AG04450 (cell line): ENCODE measurements at regions of chr5 and their contacts with region 1.

Region 1: GRCh38 chr5:59174248-59174844 is 591.5 kb downstream of the RAB3C start:
- DNase-seq: peak; percentile 70
- H3K4me3 ChIP-seq: no peak overlapping the region
- H3K27ac ChIP-seq: no peak overlapping the region
- H3K27me3 ChIP-seq: no peaks in the 10 kb centered on the region
- CTCF ChIP-seq: peak; percentile 98

Region 2: GRCh38 chr5:58871648-58872242 is 302.6 kb before region 1 on chr5:
- CTCF ChIA-PET with region 1: interaction called, 11 read pairs
- POLR2A ChIA-PET with region 1: no interaction called
- DNase-seq: no peak
- H3K4me3 ChIP-seq: no peak overlapping the region
- H3K27ac ChIP-seq: no peak overlapping the region
- H3K27me3 ChIP-seq: peaks cover 6% of the 10 kb centered on the region
- CTCF ChIP-seq: peak; percentile 72

Region 3: GRCh38 chr5:58983526-58984452 is 190.6 kb before region 1 on chr5:
- CTCF ChIA-PET with region 1: interaction called, 11 read pairs
- POLR2A ChIA-PET with region 1: no interaction called
- DNase-seq: no peak
- H3K4me3 ChIP-seq: no peak overlapping the region
- H3K27ac ChIP-seq: no peak overlapping the region
- H3K27me3 ChIP-seq: no peaks in the 10 kb centered on the region
- CTCF ChIP-seq: no peak

Region 4: DNA sequence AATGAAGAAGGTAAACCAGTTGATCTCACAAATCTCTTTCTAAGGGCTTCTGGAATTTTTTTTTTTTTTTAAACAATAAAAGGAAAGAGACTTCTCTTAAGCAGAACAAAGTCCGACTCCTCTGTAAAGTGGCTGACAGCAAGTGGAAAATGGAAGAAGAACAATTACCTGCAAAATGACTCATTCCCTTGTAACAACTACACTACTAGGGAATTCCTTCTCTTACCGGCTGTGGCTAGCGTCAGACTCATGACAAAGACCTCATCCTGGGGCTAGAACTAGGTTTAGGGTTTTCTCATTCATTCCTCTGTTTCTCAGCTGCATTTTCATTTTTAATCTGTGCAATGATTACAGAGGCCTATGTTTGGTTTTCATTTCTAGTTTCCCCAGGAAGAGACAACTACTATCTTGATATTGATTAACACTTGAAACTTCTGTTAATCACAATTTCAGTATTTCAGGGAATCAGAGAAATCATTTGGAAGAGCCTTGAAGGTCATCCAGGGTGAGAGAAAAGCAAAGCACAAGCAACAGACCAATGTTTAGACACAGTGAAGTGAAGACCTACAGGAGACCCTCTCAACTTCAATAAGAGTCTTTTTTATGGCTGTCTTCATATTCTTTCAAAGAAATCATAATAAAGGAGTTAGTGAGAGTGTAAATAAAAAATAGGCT is 153.6 kb before region 1 on chr5:
- CTCF ChIA-PET with region 1: interaction called, 16 read pairs
- POLR2A ChIA-PET with region 1: no interaction called
- DNase-seq: no peak
- H3K4me3 ChIP-seq: no peak overlapping the region
- H3K27ac ChIP-seq: no peak overlapping the region
- H3K27me3 ChIP-seq: no peaks in the 10 kb centered on the region
- CTCF ChIP-seq: no peak

Region 5: DNA sequence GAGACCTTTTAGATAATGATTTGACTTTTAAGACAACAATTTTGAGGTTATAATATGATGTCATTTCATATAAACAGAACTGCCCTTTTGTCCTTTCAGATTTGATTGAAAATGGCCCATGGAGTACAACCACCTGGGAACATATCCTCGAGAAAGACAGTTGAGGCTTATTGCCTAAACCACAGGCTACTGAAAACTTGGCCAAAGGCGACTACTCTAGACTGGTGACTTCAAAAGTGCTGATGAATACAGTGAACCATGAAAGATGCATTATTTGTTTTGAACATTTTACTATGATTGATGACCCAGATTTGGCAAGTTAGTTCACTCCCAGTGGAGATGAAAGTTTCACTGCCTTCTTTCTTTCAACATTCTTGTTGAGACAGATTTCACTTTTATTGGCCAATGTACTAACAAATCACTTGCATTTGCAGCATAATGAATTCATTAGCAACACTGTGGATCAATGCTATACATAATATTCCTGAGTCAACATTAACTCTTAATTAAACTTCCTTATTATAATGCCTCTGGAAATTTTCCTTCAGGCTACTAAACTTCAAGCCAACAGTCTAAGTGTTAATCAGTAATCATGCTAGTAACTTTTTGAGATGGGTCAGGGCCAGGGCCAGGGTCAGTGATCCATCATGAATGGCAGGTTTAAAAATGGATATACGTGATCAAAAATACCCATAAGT is 111.2 kb before region 1 on chr5:
- CTCF ChIA-PET with region 1: interaction called, 11 read pairs
- POLR2A ChIA-PET with region 1: no interaction called
- DNase-seq: no peak
- H3K4me3 ChIP-seq: no peak overlapping the region
- H3K27ac ChIP-seq: no peak overlapping the region
- H3K27me3 ChIP-seq: no peaks in the 10 kb centered on the region
- CTCF ChIP-seq: no peak

Region 6: DNA sequence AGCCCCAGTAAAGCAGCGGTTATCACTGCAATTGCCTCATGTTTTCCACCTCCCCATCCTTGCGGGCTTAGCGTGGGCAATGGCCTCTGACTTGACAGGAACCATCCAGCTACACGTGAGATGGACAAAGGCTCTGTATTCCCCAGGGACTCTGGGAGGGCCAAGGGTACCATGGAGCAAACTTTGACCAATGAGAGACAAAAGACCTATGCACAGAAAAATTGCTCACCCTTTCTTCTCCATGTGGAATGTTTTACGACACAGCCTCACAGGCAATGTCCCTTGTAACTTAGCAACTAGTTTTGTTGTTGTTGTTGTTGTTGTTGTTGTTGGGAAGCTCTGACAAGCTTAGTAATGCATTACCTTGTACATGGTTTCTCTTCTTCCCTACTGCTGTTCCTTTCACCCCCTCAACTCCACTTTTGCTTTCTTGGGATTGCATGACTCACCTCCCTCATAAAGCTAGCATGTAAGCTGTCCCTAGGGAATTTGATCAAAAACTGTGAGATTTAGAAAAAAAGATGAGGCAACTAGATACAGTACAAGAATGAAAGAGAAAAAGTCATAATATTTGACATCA is 40.6 kb before region 1 on chr5:
- CTCF ChIA-PET with region 1: interaction called, 30 read pairs
- POLR2A ChIA-PET with region 1: no interaction called
- DNase-seq: peak; percentile 45
- H3K4me3 ChIP-seq: no peak overlapping the region
- H3K27ac ChIP-seq: no peak overlapping the region
- H3K27me3 ChIP-seq: no peaks in the 10 kb centered on the region
- CTCF ChIP-seq: no peak

Region 7: DNA sequence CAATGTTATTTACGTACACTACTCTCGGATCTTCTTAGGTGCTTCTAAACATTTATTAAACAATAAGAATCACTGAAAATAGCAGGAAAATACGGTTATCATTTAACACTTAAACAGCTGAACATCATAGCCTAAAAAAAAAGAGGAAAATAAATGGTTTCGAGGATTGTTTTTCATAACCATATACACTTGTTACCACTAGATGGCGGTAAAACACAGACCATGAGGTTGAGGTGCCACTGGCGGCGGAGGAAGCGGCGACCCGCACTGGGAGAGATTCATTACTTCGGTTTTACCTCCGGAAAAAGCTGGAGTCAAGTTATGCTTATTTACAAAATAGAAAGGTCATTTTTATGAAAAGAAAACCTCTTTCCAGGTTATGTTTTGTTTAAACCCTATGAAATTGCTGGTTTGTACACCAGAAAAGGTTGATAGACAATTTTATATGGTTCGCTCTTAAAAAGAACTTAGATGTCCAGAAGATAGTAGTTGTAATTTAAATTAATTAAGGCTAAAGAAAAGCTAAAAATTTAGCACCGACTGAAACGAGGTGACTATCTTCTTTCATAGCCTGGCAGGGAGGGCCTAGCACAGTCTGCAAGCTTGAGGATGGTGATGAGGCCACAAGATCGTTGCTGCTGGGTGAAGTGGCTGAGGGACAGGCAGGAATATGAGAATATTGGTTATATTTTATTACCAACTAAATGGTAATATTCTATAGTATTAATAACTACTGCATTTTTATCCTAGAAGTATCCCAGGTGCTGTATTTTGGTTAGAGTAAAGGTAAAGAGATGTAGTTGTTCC is 14.3 kb after region 1 on chr5:
- CTCF ChIA-PET with region 1: interaction called, 85 read pairs
- POLR2A ChIA-PET with region 1: no interaction called
- DNase-seq: no peak
- H3K4me3 ChIP-seq: peak overlapping the region; percentile 28; the same call in 1 of the 2 replicates
- H3K27ac ChIP-seq: no peak overlapping the region
- H3K27me3 ChIP-seq: no peaks in the 10 kb centered on the region
- CTCF ChIP-seq: peak; percentile 72